AG04450 (cell line): ENCODE measurements at regions of chr21 and their contacts with region 1.

Region 1: GRCh38 chr21:33924079-33924765 is 8.6 kb upstream of the ATP5PO start:
- DNase-seq: peak; percentile 45
- H3K4me3 ChIP-seq: no peak overlapping the region
- H3K27ac ChIP-seq: no peak overlapping the region
- H3K27me3 ChIP-seq: no peaks in the 10 kb centered on the region
- CTCF ChIP-seq: peak; percentile 93

Region 2: DNA sequence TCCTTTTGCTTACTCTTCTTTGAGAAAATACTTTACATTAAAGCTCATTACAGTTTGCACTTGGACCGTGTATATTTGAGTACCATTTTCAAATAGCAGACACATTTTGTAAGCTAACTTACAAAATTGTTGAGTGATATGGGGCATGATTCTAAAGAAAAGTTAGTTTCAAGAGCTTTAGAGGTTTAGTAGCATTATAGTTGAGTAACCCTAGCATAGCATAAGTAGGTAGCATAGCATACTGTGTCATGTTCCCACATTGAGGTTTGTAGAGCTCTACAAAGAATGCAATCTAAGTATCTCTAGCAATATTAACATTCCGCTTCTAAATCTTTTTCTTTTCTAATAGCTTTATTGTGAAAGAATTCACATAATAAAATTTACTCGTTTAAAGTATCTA is 189.9 kb before region 1 on chr21:
- CTCF ChIA-PET with region 1: no interaction called
- POLR2A ChIA-PET with region 1: no interaction called
- DNase-seq: peak; percentile 6
- H3K4me3 ChIP-seq: no peak overlapping the region
- H3K27ac ChIP-seq: no peak overlapping the region
- H3K27me3 ChIP-seq: no peaks in the 10 kb centered on the region
- CTCF ChIP-seq: no peak

Region 3: DNA sequence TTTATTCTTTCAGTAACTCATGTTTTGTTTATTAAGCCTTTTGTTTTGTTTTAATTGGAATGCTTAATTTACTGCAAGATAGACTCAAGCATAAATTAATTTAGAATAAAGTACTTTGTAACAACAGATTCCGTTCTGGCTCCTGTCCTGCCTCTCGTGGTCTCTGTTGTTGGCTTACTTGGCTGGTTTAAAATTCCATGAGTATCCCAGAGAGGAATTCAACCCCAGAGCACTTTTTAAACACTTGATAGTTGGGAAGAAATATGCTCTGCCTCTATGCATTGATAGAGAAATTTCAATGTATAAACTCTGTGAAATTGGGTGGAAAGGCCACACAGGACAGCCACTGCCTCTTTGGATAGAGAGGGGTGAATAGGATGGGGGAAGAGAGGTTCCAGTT is 98.3 kb before region 1 on chr21:
- CTCF ChIA-PET with region 1: no interaction called
- POLR2A ChIA-PET with region 1: no interaction called
- DNase-seq: peak; percentile 24
- H3K4me3 ChIP-seq: no peak overlapping the region
- H3K27ac ChIP-seq: no peak overlapping the region
- H3K27me3 ChIP-seq: no peaks in the 10 kb centered on the region
- CTCF ChIP-seq: no peak

Region 4: GRCh38 chr21:33936301-33937038 is 12.2 kb after region 1 on chr21:
- CTCF ChIA-PET with region 1: interaction called, 24 read pairs
- POLR2A ChIA-PET with region 1: no interaction called
- DNase-seq: no peak
- H3K4me3 ChIP-seq: no peak overlapping the region
- H3K27ac ChIP-seq: no peak overlapping the region
- H3K27me3 ChIP-seq: no peaks in the 10 kb centered on the region
- CTCF ChIP-seq: no peak

Region 5: DNA sequence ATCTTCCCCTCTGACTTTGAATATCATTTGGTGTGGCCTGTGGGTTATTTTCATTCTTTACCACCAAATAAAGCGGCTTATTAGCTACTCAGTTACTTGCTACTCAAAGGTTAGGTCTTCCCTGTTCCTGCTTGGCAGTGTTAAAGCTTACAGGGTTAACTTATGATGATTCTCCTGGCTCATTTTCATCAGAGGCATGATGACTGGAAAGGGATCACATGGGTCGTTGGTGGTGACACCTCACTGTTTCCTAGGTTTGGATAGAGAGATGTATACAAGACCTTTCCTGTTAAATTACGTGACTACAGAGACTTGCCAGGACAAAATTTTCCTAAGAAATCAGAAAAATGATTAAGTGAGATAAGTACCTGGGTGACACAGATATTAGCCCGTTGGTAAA is 176.6 kb after region 1 on chr21:
- CTCF ChIA-PET with region 1: interaction called, 12 read pairs
- POLR2A ChIA-PET with region 1: no interaction called
- DNase-seq: no peak
- H3K4me3 ChIP-seq: no peak overlapping the region
- H3K27ac ChIP-seq: no peak overlapping the region
- H3K27me3 ChIP-seq: no peaks in the 10 kb centered on the region
- CTCF ChIP-seq: no peak

Region 6: DNA sequence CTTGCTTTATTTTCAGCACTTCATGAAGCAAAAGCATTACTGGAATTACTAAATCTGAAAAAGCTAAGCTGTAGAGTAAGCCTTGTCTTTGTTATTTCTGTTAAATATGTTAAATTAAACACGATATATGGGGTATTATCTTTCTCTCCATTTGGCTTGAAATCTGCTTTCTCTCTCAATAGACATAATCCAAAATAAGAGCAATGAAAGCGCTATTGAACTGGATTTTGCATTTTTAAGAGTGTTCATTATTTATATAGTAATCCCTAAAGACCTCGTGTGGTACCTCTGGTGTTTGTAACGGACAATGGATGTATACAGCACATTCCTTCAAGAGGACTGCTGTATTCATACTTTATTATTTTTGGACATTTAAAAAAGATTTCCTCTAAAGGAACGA is 348.1 kb after region 1 on chr21:
- CTCF ChIA-PET with region 1: interaction called, 10 read pairs
- POLR2A ChIA-PET with region 1: no interaction called
- DNase-seq: no peak
- H3K4me3 ChIP-seq: no peak overlapping the region
- H3K27ac ChIP-seq: no peak overlapping the region
- H3K27me3 ChIP-seq: peaks cover 16% of the 10 kb centered on the region
- CTCF ChIP-seq: no peak

Region 7: DNA sequence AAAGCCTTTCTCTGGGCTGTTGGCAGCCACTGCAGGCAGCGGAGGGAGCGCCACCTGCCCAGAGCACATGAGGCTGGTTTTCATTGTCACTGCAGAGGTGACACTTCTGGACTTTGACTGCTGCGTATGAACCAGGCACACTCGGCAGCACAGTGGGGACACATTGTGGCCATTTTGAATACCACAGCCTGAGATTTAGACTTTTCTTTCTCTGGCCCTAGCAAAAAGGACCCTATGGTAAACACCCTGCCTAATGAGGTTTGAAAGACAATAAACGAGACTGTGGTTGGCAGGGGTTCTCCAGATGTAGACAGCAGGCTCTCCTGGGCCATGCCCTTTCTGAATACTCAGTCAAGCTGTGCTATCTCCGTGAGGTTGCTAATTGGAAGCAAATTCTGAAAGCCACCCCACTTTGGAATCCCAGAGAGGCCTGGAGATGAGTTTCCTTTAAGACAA is 427.6 kb after region 1 on chr21:
- CTCF ChIA-PET with region 1: interaction called, 102 read pairs
- POLR2A ChIA-PET with region 1: no interaction called
- DNase-seq: no peak
- H3K4me3 ChIP-seq: no peak overlapping the region
- H3K27ac ChIP-seq: no peak overlapping the region
- H3K27me3 ChIP-seq: peaks cover 17% of the 10 kb centered on the region
- CTCF ChIP-seq: peak; percentile 75

Region 8: GRCh38 chr21:34367321-34367935 is 443.2 kb after region 1 on chr21:
- CTCF ChIA-PET with region 1: interaction called, 24 read pairs
- POLR2A ChIA-PET with region 1: interaction called, 4 read pairs
- DNase-seq: peak; percentile 55
- H3K4me3 ChIP-seq: no peak overlapping the region
- H3K27ac ChIP-seq: no peak overlapping the region
- H3K27me3 ChIP-seq: peaks cover 3% of the 10 kb centered on the region
- CTCF ChIP-seq: peak; percentile 90